Psoas muscle (tissue), 8 donors: ENCODE measurements at regions of chr5 and their contacts with region 1.

Region 1: GRCh38 chr5:148998174-148998797 is 64.6 kb downstream of the SH3TC2 start:
- DNase-seq: no peak
- ATAC-seq: peak; percentile 57 to 76 (median 65)
- H3K4me3 ChIP-seq: no peak overlapping the region
- H3K27ac ChIP-seq: no peak overlapping the region
- H3K4me1 ChIP-seq: peaks cover 45% of the 10 kb centered on the region
- H3K27me3 ChIP-seq: no peaks in the 10 kb centered on the region
- CTCF ChIP-seq: peak; percentile 75

Region 2: DNA sequence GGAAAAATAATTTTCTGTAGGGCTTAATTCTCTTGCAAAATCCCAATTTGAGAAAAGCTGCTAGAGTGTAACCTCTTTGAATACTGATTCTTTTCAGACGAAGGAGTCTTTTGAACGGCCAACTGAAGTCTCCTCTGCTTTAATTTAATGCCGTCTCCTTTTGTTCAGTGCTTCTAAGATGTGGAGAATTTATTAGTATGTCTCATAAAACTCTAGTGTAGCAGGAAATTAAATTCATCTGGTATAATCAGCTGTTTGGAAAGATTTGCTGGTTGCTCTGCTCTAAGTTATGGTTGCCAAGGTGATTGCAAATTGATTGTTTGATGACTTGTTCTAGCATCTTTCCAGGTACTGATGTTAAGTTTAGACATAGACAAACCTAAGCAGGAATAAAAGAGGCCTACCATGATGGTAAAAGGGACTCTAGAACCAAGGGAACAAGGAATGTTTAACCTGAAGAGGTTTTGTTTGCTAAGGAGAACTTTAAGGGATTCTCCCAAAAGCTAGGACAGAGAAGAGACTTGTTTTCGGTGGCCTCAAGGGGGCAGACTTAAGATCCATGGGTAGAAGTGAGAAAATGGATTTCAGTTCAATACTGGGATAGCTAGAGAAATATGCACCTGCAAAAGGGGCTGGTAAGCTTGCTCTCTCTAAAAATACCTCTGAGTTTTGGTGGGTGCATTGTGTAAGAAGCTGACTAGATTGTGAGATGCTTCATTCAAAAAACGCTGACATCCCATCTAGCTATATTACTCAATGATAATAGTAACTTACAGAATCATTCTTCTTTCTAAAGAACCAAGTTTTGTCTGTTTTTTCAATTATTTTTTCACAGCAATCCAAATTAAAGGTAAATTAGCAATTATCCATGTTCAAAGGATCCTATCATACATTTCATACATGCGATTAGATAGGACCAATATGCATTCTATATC is 177.6 kb before region 1 on chr5:
- intact Hi-C with region 1: loop called (anchors 5 kb)
- DNase-seq: no peak
- ATAC-seq: peak in 1 of 4 donors; percentile 62
- H3K4me3 ChIP-seq: no peak overlapping the region
- H3K27ac ChIP-seq: no peak overlapping the region
- H3K4me1 ChIP-seq: peaks cover 8% of the 10 kb centered on the region
- H3K27me3 ChIP-seq: no peaks in the 10 kb centered on the region
- CTCF ChIP-seq: peak; percentile 59